Head of caudate nucleus (tissue), 42 donors: ENCODE measurements at regions of chr3 and their contacts with region 1.

Region 1: DNA sequence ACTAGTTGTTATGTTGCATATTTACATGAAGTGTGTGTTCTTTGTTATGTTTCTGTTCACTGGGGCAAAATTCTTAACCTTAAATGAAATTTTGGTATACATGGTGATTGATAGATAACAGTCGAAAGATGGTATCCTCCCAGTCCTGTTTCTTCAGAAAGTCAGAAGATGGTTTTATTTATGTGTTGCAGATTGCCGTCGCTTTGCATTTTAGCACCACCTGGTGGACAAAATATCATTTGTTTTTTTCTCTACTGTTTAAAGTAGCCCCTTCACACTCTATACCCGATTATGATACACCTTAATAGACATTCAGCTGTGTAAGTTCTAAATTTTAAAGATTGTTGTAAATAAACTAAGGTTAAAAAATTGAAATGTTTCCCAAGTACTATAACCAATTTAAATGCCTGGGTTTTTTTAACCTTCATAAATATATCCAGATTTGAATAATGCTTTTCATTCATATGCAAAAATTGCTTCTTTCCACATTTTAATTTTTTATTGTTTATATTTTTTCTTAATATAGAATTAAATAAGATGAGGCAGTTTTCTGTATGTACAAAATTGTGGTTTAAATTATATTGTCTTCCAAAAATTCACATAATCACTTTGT is 152.2 kb downstream of the ALCAM start:
- DNase-seq: peak in 19 of 42 donors; percentile 24 to 80 (median 47)

Region 2: DNA sequence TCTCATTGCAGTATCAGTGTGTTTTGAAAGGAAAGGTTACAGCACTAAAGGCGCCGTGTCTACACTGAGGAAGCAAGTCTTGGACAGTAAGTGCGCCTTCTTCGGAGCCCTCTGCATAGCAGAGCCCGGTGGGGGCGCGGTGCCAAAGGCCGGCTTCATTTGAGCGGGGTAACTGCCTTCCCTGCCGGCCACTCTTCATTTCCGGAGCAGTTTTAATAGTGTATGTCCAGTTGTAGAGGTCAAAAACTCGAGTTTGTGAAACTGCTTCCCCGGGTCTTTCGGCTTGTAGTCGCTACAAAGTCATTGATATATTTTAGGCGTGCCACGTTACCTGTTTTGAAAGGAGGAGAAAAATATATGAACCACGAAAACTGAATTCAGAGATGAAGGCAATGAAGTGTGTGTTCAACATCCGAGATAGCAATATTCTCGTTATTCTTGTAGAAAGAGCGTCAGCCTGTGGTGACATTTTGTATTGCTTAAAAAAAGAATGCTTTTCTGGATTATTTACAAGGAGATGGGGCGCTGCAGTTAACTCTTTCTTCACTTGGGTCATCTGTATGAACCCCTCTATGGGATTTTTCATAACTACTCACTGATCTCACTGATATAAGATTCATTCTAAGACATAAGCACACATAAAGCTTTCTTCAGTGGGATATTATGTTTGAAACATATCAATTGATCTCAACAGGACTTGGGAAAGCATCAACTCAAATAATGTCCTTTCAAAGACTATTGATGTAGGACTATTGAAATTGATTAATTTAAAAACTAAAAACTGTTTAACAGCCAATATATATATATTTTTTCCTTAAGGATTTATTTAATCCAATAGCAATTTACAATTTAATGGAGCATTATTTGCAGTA is 149.2 kb before region 1 on chr3:
- intact Hi-C with region 1: loop called (anchors 2 kb)
- DNase-seq: peak; percentile 47 to 92 (median 79)

Region 3: DNA sequence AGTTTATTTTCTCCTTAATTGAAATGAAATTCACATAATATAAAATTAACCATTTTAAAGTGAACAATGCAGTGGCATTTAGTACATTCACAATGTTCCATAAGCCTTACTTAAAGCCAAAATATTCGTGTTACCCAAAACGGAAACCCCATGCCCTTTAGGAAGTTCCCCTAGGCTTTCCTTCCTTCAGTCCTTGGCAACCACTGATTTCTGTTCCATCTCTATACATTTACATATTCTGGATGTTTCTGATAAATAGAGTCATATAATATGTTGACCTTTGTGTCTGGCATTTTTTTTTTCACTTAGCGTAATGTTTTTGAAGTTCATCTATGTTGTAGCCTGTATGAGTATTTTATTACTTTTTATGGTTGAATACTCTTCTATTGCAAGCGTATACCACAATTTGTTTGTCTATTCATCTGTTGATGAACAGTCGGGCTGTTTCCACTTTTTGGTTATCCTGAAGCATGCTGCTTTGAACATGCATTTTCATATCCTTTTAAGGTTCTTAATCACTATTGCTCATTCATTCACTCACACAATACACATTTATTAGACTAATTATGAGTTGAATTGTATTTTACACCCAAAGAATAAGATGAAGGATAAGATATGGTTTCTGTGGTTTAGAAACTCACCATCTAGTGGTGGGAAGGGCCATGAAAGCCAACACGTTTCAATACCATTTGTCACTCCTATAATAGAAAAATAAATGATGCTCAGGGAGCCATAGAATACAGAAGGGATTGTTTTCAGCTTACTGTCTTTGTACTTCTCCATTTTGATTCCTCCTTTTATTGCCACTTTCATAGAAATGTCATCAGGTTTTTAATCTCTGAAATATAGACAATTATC is 758.1 kb after region 1 on chr3:
- intact Hi-C with region 1: no loop called
- DNase-seq: no peak